Activated CD8-positive, alpha-beta T cell treated with anti-CD3 and anti-CD28 coated beads for 36 hours (primary cell): ENCODE measurements at regions of chr11 and their contacts with region 1.

Region 1: DNA sequence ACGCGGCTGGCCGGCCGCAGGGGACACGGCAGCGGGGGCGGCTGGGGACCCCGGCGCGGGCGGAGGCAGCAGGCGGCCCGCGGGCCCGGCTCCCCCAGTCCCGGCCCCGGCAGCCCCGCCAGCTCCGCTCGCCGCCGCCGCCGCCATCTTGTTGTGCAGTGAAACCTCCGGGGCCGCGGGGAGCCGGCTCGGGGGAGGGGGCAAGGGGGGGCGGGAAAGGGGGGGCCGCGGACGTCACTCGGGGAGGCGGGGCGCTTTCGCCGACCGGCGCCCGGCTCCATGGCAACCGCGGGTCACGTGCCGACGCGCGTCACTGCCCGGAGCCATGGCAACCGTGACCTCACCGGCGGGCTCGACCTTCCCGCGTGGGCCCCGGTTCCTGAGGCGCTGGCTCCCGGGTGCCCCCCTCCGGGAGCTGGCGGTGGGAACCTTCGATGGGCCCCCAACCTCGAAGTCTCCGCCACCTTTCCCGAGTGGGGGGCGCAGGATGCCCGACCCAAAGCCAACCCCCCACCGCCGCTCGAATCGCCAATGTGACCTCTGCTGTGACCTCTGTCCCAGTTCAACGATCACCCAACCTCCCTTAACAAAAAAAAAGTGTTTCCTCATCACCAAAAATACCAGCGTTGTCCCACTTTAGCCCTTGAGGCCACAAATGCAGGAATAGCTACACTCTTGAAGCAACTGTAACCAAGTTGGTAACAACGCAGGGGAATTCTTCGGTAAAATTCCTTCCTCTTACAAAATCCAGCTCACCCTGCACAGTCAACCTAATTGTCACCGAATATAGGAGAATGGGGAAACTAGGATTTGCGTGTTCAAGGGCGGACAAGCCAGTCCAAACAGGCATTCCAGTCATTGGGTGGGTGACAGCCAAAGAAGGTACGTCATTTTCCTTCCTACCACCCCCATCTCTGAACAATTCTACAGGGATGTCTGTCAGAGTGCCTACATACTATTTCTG is at the start of gene SIK3:
- DNase-seq: peak; percentile 92
- ATAC-seq: peak; percentile 76
- H3K4me3 Mint-ChIP-seq: peak within 1 kb of the TSS; percentile 98
- H3K27ac Mint-ChIP-seq: peak within 1 kb of the TSS; percentile 94
- H3K4me1 Mint-ChIP-seq: peaks cover 42% of the 10 kb centered on the region
- H3K27me3 Mint-ChIP-seq: no peaks in the 10 kb centered on the region
- CTCF ChIP-seq: peak; percentile 16
- total RNA-seq, gene SIK3: 18.7 to 24.1 TPM

Region 2: GRCh38 chr11:116835791-116836631 is 262.5 kb before region 1 on chr11:
- CTCF ChIA-PET with region 1: interaction called, 10 read pairs
- POLR2A ChIA-PET with region 1: no interaction called
- intact Hi-C with region 1: no loop called
- DNase-seq: peak; percentile 89
- ATAC-seq: peak; percentile 97
- H3K4me3 Mint-ChIP-seq: peak overlapping the region; percentile 72
- H3K27ac Mint-ChIP-seq: peak overlapping the region; percentile 34
- H3K4me1 Mint-ChIP-seq: peaks cover 4% of the 10 kb centered on the region
- H3K27me3 Mint-ChIP-seq: no peaks in the 10 kb centered on the region
- CTCF ChIP-seq: peak; percentile 65

Region 3: DNA sequence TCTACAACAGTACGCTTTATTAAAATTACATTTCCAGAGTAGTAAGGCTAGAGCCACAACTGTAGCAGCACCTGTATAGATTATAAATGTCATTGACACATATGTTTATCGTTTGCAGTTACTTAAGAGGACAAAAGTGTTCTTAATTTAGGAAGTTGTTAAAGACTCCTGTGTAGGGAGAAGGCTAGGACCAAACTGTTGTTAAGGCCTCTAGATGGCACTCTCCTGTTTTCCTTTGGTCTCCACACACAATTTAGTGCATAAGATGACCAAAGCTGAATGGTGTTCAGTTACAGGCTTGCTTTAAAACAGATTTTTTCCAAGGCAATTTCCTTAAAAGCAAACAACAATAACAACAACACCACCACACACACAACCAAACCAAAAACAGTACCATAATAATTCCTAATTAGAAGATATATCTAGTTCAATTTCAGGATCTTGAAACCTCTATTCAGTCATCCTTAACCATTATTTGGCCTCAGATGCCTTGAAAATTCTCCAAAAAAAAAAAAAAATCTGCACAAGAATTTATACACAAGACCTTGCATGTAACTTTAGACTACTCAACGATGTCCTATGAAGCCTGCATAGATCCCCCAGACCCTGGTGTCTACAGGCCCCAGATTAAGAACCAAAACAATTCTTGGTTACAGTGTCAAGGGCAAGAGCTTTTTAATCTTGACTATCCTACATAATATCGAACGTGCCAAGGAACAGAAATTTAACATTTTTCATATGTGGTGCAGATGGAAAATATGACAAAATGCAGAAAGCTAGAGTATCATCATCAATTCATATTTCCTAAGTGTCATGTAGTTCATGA is 218.5 kb before region 1 on chr11:
- CTCF ChIA-PET with region 1: interaction called, 72 read pairs
- POLR2A ChIA-PET with region 1: no interaction called
- intact Hi-C with region 1: loop called (anchors 5 kb)
- DNase-seq: peak; percentile 34
- ATAC-seq: peak; percentile 77
- H3K4me3 Mint-ChIP-seq: no peak overlapping the region
- H3K27ac Mint-ChIP-seq: no peak overlapping the region
- H3K4me1 Mint-ChIP-seq: peaks cover 19% of the 10 kb centered on the region
- H3K27me3 Mint-ChIP-seq: no peaks in the 10 kb centered on the region
- CTCF ChIP-seq: peak; percentile 71

Region 4: DNA sequence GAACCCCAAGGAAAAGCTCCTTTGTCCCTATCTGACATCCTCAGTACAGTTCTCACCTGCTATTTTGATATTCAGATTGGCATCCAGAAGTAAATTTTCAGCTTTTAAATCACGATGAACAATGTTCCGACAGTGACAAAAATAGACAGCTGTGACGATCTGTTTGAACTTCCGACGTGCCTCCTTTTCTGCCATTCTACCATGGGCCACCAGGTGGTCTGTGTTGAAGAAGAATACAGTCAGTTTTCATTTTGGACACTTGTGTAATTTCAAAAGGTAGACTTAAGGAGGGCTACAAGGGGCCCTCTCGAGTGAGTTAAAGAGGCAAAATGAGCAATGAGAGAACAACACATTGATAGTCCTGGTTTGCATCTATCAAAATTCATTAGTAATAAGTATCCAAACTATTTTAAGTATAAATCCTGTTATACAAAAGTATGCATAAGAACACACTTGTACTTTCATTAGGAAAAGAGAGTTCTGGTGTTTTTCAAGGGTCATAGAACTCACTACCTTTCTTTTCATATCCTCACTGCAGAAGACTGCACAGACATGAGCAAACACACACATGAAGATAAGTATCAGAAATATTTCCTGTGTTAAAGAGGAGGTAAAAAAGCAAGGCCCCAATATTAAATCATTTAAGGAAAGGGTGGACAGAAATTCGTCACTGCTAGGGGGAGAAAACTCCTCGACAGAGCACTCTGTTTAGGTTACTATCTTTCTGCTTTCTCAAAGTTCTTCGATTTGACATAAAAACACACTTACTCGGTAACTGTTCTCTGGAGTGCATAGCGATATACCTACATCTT is 171.2 kb before region 1 on chr11:
- CTCF ChIA-PET with region 1: interaction called, 17 read pairs
- POLR2A ChIA-PET with region 1: interaction called, 22 read pairs
- intact Hi-C with region 1: loop called (anchors 5 kb)
- DNase-seq: peak; percentile 79
- ATAC-seq: peak; percentile 53
- H3K4me3 Mint-ChIP-seq: peak overlapping the region; percentile 12
- H3K27ac Mint-ChIP-seq: peak overlapping the region; percentile 70
- H3K4me1 Mint-ChIP-seq: peaks cover 76% of the 10 kb centered on the region
- H3K27me3 Mint-ChIP-seq: no peaks in the 10 kb centered on the region
- CTCF ChIP-seq: peak; percentile 79

Region 5: GRCh38 chr11:117020287-117020686 is 78.3 kb before region 1 on chr11:
- CTCF ChIA-PET with region 1: no interaction called
- POLR2A ChIA-PET with region 1: interaction called, 4 read pairs
- intact Hi-C with region 1: loop called (anchors 2 kb)
- DNase-seq: peak; percentile 78
- ATAC-seq: peak; percentile 46
- H3K4me3 Mint-ChIP-seq: no peak overlapping the region
- H3K27ac Mint-ChIP-seq: peak overlapping the region; percentile 63
- H3K4me1 Mint-ChIP-seq: peaks cover 66% of the 10 kb centered on the region
- H3K27me3 Mint-ChIP-seq: no peaks in the 10 kb centered on the region
- CTCF ChIP-seq: no peak

Region 6: GRCh38 chr11:117064275-117064674 is 34.3 kb before region 1 on chr11:
- CTCF ChIA-PET with region 1: interaction called, 4 read pairs
- POLR2A ChIA-PET with region 1: interaction called, 10 read pairs
- intact Hi-C with region 1: loop called (anchors 5 kb)
- DNase-seq: no peak
- ATAC-seq: no peak
- H3K4me3 Mint-ChIP-seq: no peak overlapping the region
- H3K27ac Mint-ChIP-seq: peak overlapping the region; percentile 90
- H3K4me1 Mint-ChIP-seq: peaks cover 69% of the 10 kb centered on the region
- H3K27me3 Mint-ChIP-seq: no peaks in the 10 kb centered on the region
- CTCF ChIP-seq: no peak

Region 7: GRCh38 chr11:117127171-117127901 is 28.8 kb after region 1 on chr11:
- CTCF ChIA-PET with region 1: no interaction called
- POLR2A ChIA-PET with region 1: no interaction called
- intact Hi-C with region 1: no loop called
- DNase-seq: no peak
- ATAC-seq: no peak
- H3K4me3 Mint-ChIP-seq: no peak overlapping the region
- H3K27ac Mint-ChIP-seq: no peak overlapping the region
- H3K4me1 Mint-ChIP-seq: no peaks in the 10 kb centered on the region
- H3K27me3 Mint-ChIP-seq: no peaks in the 10 kb centered on the region
- CTCF ChIP-seq: no peak

Region 8: GRCh38 chr11:117232092-117232878 is 133.7 kb after region 1 on chr11 and contains the start of gene RNF214:
- CTCF ChIA-PET with region 1: interaction called, 4 read pairs
- POLR2A ChIA-PET with region 1: interaction called, 14 read pairs
- intact Hi-C with region 1: no loop called
- DNase-seq: peak; percentile 71
- ATAC-seq: peak; percentile 73
- H3K4me3 Mint-ChIP-seq: peak within 1 kb of the TSS; percentile 94
- H3K27ac Mint-ChIP-seq: peak within 1 kb of the TSS; percentile 98
- H3K4me1 Mint-ChIP-seq: peaks cover 34% of the 10 kb centered on the region
- H3K27me3 Mint-ChIP-seq: no peaks in the 10 kb centered on the region
- CTCF ChIP-seq: peak; percentile 93
- total RNA-seq, gene RNF214: 14.7 to 18.3 TPM